ENCODE measurements at regions of chr11 and their contacts with region 1.

Region 1: GRCh38 chr11:62372871-62373270 is 35.6 kb downstream of the ASRGL1 start:
- DNase-seq: no peak
- ATAC-seq: no peak
- H3K4me3 ChIP-seq: no peak overlapping the region
- H3K27ac ChIP-seq: no peak overlapping the region
- H3K4me1 ChIP-seq: no peaks in the 10 kb centered on the region
- H3K27me3 ChIP-seq: no peaks in the 10 kb centered on the region
- CTCF ChIP-seq: no peak
- POLR2A ChIP-seq: no peak

Region 2: GRCh38 chr11:62169091-62169847 is 203.6 kb before region 1 on chr11:
- in situ Hi-C with region 1: no loop called
- intact Hi-C with region 1: loop called (anchors 5 kb)
- DNase-seq: peak in 1 of 2 donors; percentile 50
- ATAC-seq: peak; percentile 19 to 47
- H3K4me3 ChIP-seq: no peak overlapping the region
- H3K27ac ChIP-seq: peak overlapping the region; percentile 1 to 44 (median 32)
- H3K4me1 ChIP-seq: peaks cover 12 to 15% of the 10 kb centered on the region in 2 donors
- H3K27me3 ChIP-seq: no peaks in the 10 kb centered on the region
- CTCF ChIP-seq: no peak
- POLR2A ChIP-seq: no peak

Region 3: GRCh38 chr11:62340269-62340901 is 32.5 kb before region 1 on chr11:
- in situ Hi-C with region 1: no loop called
- intact Hi-C with region 1: loop called (anchors 2 kb)
- DNase-seq: no peak
- ATAC-seq: no peak
- H3K4me3 ChIP-seq: no peak overlapping the region
- H3K27ac ChIP-seq: peak overlapping the region in 2 of 4 donors; percentile 29 to 38
- H3K4me1 ChIP-seq: peaks cover 0 to 14% of the 10 kb centered on the region in 2 donors
- H3K27me3 ChIP-seq: no peaks in the 10 kb centered on the region
- CTCF ChIP-seq: peak in 4 of 5 experiments; percentile 24 to 51 (median 42)
- POLR2A ChIP-seq: no peak

Measured in gastrocnemius medialis (tissue), 4 donors.